Activated CD4-positive, alpha-beta memory T cell treated with anti-CD3 and anti-CD28 coated beads, Interleukin-2, amount 10 ng/mL, durations not matched to agents 7 days and 5 days (primary cell): ENCODE measurements at regions of chr7 and their contacts with region 1.

Region 1: DNA sequence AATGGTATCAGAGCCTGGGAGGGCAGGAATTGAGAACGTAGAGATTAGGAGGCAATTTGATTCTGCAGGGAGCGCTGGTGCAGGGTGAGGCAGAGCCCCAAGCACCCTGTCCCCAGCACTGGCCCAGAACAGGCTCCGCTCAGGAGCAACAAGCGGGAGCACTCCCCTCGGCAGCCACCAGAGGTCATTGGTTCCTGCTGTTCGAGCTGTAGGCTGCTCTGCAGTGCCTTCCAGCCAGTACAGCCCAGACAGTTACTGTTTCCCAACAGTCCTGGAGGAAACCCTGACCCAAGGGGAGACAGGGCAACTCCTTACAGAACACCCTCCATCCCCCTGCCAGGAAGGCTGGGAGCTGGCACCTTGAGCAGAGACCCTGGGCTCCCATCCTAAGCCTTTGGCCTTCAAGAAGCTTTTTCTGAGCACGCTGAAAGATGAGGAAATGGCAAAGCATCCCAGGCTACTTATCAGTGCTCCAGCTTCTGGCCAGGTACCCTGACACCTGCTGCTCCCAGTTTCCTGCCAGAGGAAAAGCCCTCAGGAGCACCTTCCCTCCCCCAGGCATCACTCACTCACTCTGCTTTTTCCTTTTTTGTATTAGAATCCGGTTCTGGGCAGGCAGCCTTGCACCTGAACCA is 71.2 kb upstream of the EFCAB10 start:
- DNase-seq: peak; percentile 67
- H3K4me3 Mint-ChIP-seq: no peak overlapping the region
- H3K27ac Mint-ChIP-seq: no peak overlapping the region
- H3K4me1 Mint-ChIP-seq: peaks cover 15% of the 10 kb centered on the region
- H3K27me3 Mint-ChIP-seq: no peaks in the 10 kb centered on the region

Region 2: DNA sequence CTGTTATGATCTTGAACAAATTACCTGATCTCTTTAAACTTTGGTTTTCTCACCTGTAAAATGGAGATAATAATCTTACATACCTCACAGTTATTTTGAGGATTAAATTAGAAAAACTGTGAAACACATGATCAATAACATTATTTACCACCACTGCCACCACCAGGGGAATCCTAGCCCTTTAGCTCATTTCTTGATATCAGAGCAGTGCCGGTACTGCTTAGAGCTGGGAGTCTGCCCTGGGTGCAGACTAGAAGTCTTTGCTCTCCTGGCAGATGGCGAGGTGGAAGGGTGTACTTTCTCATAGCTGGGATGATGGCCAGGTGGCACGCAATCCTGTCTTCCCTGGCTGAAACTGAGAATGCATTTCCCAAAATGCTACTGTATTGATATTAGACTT is 58.4 kb before region 1 on chr7:
- CTCF ChIA-PET with region 1: no interaction called
- POLR2A ChIA-PET with region 1: no interaction called
- DNase-seq: no peak
- H3K4me3 Mint-ChIP-seq: no peak overlapping the region
- H3K27ac Mint-ChIP-seq: no peak overlapping the region
- H3K4me1 Mint-ChIP-seq: peaks cover 5% of the 10 kb centered on the region
- H3K27me3 Mint-ChIP-seq: peaks cover 10% of the 10 kb centered on the region

Region 3: GRCh38 chr7:105664816-105665525 is 12.5 kb after region 1 on chr7:
- CTCF ChIA-PET with region 1: interaction called, 44 read pairs
- POLR2A ChIA-PET with region 1: no interaction called
- DNase-seq: no peak
- H3K4me3 Mint-ChIP-seq: no peak overlapping the region
- H3K27ac Mint-ChIP-seq: no peak overlapping the region
- H3K4me1 Mint-ChIP-seq: peaks cover 1% of the 10 kb centered on the region
- H3K27me3 Mint-ChIP-seq: no peaks in the 10 kb centered on the region

Region 4: DNA sequence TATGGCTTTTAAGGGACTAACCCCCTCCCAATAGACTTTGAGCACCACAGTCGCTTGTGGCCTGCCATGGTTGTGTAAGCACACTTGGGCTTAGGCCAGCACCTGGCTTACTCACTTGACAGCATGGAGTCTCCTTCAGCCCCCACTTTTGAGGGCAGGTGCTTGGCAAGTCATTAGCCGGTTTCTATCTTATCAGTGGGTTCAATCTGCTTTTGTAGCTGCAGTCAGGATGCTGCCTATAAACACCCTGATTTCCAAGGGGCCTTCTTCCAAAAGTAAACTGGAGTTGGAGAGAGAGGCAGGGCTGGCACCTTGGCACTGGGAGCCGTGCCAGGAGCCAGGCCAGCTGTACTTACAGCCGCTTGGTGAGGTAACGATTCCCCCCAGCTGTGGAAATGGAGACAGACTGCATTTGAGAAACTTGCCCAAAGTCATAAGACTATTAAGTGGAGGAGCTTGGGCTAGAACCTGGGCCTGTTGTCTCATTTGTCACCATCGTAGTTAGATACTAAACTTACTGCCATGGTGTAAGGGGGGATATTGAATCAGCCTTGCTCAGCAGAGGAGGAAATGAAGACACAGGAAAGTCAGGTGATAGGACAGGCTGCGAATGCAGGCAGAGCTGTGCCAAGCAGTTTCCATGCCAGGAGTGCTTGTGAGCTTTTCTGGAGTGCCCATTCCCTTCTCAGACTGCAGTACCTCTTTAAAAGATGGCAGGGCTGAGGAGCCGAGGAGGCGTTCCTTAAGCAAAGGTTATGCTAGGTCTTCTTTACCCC is 21.1 kb after region 1 on chr7:
- CTCF ChIA-PET with region 1: interaction called, 44 read pairs
- POLR2A ChIA-PET with region 1: interaction called, 7 read pairs
- DNase-seq: no peak
- H3K4me3 Mint-ChIP-seq: no peak overlapping the region
- H3K27ac Mint-ChIP-seq: no peak overlapping the region
- H3K4me1 Mint-ChIP-seq: peaks cover 61% of the 10 kb centered on the region
- H3K27me3 Mint-ChIP-seq: no peaks in the 10 kb centered on the region

Region 5: GRCh38 chr7:105678811-105679495 is 26.5 kb after region 1 on chr7:
- CTCF ChIA-PET with region 1: interaction called, 44 read pairs
- POLR2A ChIA-PET with region 1: interaction called, 7 read pairs
- DNase-seq: peak; percentile 35
- H3K4me3 Mint-ChIP-seq: peak overlapping the region; percentile 81
- H3K27ac Mint-ChIP-seq: peak overlapping the region; percentile 92
- H3K4me1 Mint-ChIP-seq: peaks cover 57% of the 10 kb centered on the region
- H3K27me3 Mint-ChIP-seq: no peaks in the 10 kb centered on the region

Region 6: DNA sequence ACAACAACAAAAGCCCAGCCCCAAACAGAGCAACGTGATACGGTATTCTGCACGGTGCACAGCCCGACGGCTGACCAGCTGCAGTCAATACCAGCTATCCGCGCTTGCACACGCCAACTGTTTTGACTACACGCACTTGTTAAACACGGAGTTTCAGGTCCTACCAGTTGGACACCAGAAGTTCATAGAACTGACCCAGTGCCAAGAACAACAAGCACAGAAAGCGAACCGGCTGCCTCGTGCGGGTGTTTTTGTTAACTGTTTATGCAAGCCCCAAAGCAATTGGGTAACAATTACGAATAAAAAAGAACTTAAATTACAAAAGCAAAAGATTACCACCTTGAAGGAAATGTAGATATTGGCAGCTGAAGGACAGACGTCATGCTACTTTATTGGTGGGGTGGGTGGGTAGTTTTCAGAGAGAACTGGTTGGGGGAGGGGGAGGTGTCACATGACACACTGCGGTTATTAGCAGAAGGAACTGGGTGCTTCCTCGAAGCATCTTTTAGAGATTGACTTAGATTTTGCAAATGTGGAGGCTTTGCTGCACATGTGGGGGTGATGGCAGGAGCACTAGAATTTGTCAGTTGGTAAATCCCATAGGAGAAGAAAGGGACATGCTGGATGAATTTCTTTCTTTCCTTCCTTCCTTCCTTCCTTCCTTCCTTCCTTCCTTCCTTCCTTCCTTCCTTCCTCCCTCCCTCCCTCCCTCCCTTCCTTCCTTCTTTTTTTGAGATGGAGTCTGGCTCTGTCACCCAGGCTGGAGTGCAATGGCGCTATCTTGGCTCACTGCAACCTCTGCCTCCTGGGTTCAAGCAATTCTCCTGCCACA is 39.5 kb after region 1 on chr7:
- CTCF ChIA-PET with region 1: interaction called, 5 read pairs
- POLR2A ChIA-PET with region 1: interaction called, 12 read pairs
- DNase-seq: peak; percentile 79
- H3K4me3 Mint-ChIP-seq: peak overlapping the region; percentile 74
- H3K27ac Mint-ChIP-seq: peak overlapping the region; percentile 92
- H3K4me1 Mint-ChIP-seq: peaks cover 37% of the 10 kb centered on the region
- H3K27me3 Mint-ChIP-seq: no peaks in the 10 kb centered on the region

Region 7: GRCh38 chr7:105707381-105707780 is 54.9 kb after region 1 on chr7:
- CTCF ChIA-PET with region 1: no interaction called
- POLR2A ChIA-PET with region 1: no interaction called
- DNase-seq: no peak
- H3K4me3 Mint-ChIP-seq: no peak overlapping the region
- H3K27ac Mint-ChIP-seq: no peak overlapping the region
- H3K4me1 Mint-ChIP-seq: peaks cover 19% of the 10 kb centered on the region
- H3K27me3 Mint-ChIP-seq: no peaks in the 10 kb centered on the region

Region 8: GRCh38 chr7:106041140-106041717 is 388.8 kb after region 1 on chr7:
- CTCF ChIA-PET with region 1: interaction called, 28 read pairs
- POLR2A ChIA-PET with region 1: interaction called, 3 read pairs
- DNase-seq: peak; percentile 35
- H3K4me3 Mint-ChIP-seq: no peak overlapping the region
- H3K27ac Mint-ChIP-seq: no peak overlapping the region
- H3K4me1 Mint-ChIP-seq: peaks cover 7% of the 10 kb centered on the region
- H3K27me3 Mint-ChIP-seq: peaks cover 32% of the 10 kb centered on the region